ENCODE measurements at regions of chr7 and their contacts with region 1.

Region 1: DNA sequence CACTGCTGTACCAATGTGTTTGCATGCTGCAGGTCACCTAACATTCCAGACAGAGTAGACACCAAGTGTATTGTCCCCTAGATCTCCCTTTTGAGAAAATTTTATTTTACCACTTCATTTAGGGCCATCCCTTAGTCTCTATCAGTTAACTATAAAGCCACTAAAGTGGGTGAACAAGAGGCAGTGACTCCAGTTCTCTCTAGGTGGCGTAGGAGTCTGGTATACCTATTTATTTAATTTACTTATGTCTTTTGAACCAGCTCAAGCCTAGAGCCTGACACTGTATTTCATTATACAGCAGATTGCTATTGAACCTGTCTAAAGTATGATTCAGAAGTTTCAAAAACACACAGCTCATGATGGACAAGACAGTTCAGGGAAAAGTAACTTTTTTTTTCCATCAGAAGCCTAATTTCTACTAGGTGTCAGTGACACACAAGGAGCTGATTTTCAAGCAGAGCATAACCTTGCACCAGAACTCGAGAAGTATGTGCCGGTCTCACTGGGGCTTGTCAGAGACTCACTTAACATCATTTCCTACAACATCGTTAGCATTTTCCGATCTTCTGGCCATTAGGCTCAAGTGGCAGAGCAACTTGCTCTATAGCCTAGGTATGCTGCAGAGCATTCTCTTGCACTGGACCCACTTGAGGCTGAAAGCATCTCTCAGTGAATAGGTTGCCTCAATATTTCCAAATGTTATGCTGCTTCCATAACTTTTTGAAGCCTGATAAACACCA is 175.4 kb downstream of the CDC14C start:
- DNase-seq: no peak
- H3K4me3 ChIP-seq: no peak overlapping the region
- H3K27ac ChIP-seq: no peak overlapping the region
- H3K4me1 ChIP-seq: no peaks in the 10 kb centered on the region
- H3K27me3 ChIP-seq: no peaks in the 10 kb centered on the region
- CTCF ChIP-seq: peak in 1 of 5 experiments; percentile 21
- EP300 ChIP-seq: no peak
- POLR2A ChIP-seq: no peak

Region 2: GRCh38 chr7:49127359-49127913 is 27.7 kb after region 1 on chr7:
- in situ Hi-C with region 1: no loop called
- intact Hi-C with region 1: no loop called
- DNase-seq: no peak
- H3K4me3 ChIP-seq: no peak overlapping the region
- H3K27ac ChIP-seq: no peak overlapping the region
- H3K4me1 ChIP-seq: no peaks in the 10 kb centered on the region
- H3K27me3 ChIP-seq: no peaks in the 10 kb centered on the region
- CTCF ChIP-seq: no peak
- EP300 ChIP-seq: no peak
- POLR2A ChIP-seq: no peak

Region 3: DNA sequence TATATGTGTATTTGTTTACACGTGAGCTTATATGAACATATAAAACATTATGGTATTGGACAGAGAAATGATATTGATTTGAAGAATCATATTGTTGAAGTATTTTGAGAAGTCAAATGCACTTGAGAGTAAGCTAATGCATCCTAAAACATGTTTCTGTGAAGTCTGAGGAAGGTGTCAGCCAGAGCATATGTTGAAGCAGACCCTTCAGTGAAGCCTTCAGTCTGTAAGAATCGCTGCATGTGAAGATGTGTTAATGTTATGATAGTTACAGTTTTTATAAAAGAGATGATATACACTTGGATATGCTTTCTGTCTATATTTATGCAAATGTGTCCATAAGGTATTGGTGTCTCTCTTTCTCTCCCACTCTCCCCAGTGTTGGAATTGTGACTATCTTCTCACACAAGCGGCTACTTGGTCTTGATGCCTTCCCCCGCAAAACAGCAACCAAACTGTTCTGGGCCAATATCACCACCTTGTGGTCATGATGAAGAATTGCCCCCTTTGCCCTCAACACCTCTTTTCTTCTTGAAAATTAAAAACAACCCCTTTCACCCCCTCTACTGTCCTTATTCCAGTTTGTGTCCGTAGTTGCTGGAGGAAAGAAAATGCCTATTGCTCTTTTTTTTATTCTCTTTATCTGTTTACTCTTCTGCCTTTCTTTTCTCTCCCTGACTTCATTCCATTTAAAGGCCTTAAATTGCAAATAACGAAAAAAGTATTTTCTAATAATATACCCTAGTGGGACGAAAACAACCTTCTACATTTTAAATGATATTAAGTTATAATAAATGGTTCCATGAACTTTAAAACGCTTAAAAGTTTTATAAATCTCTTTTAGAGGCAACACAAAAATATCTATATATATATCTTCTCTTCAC is 1269.6 kb after region 1 on chr7:
- in situ Hi-C with region 1: no loop called
- intact Hi-C with region 1: loop called (anchors 5 kb)
- DNase-seq: no peak
- H3K4me3 ChIP-seq: no peak overlapping the region
- H3K27ac ChIP-seq: no peak overlapping the region
- H3K4me1 ChIP-seq: no peaks in the 10 kb centered on the region
- H3K27me3 ChIP-seq: no peaks in the 10 kb centered on the region
- CTCF ChIP-seq: peak; percentile 15 to 49 (median 32)
- EP300 ChIP-seq: no peak
- POLR2A ChIP-seq: no peak

Measured in transverse colon (tissue), 4 donors.